ENCODE measurements at regions of chr3 and their contacts with region 1.

Region 1: DNA sequence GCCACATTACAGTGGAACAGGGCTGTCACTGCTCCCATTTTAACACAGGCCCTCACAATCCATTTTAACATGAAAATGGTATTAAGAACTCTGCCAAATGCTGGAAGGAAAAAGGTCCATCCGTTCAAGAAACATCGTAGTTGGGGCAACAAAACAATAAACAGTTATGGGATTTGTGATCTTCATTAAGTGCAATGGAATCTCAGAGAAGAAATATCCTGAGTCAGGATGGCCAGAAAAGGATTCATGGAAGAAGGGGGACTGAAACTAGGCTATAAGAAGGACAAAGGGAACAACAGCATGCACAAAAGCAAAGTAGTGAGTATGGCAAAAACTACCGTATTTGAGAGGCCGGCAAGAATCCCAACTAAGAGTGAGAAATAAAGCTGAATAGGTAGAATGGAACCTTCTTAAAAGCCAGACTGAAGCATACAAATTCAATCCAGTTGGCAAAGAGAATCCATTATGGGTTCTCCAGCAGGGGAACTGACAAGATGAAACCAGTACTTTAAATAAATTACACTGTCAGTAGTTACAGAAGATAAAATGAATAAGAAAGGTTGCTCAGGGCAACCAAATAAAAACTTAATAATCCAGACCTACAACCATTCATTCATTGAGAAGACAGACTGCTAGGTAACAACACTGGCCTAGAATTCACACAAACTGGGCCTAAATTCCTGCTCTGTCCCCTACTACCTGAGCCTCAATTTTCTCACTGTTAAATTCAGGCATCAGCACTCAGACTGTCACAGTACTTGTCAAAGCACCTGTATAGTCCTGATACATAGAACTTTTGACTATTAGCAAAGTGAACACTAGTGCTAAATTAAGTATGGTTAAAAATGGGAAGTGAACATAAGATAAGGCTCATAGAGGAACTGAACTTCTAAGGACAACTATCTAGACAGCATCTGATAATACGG is 6.3 kb downstream of the TBL1XR1 start:
- DNase-seq: no peak
- ATAC-seq: peak in 2 of 4 donors; percentile 21 to 43
- H3K4me3 ChIP-seq: peak overlapping the region in 1 of 12 donors; percentile 7
- H3K27ac ChIP-seq: peak overlapping the region in 10 of 12 donors; percentile 1 to 57 (median 24)
- H3K4me1 ChIP-seq: peaks cover 4 to 61% (median 34%) of the 10 kb centered on the region in 12 donors
- H3K27me3 ChIP-seq: no peaks in the 10 kb centered on the region
- CTCF ChIP-seq: no peak
- POLR2A ChIP-seq: no peak

Region 2: DNA sequence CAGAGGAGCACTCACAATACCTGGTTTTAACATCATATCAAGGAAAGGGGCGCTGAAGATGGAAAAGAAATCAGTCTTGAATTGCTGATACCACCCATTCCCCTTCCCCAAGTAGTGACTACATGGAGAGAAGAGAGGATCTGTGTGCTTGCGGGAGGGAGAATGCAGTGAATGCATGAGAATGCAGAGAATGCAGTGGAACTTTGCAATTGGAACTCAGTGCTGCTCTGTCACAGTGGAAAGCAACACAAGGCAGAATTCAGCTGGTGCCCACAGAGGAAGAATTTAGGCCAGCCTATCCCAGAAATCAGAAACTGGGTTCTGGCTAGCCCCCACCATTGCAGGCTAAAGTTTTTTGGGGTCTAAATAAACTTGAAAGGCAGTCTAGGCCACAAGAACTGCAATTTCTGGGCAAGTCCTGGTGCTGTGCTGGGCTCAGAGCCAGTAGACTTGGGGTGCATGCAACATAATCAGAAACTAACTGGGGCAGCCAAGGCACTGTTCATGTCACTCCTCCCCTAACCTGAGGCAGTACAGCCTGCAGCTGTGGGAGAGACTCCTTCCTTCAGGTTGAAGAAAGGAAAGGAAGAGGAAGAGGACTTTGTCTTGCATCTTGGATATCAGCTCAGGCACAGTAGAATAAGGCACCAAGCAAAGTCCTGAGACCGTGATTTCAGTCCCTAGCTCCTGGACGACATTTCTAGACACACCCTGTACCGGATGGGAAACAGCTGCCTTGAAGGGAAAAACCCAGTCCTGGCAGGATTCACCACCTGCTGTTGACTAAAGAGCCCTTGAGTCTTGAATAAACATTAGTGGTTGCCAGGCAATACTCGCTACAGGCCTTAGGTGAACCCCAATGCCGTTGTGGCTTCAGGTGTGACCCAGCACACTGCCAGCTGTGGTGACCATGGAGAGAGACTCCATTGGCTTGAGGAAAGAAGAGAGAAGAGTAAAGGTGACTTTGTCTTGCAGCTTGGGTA is 323.0 kb before region 1 on chr3:
- intact Hi-C with region 1: no loop called
- DNase-seq: no peak
- ATAC-seq: peak; percentile 24 to 36 (median 34)
- H3K4me3 ChIP-seq: no peak overlapping the region
- H3K27ac ChIP-seq: no peak overlapping the region
- H3K4me1 ChIP-seq: peaks cover 0 to 6% (median 0%) of the 10 kb centered on the region in 12 donors
- H3K27me3 ChIP-seq: no peaks in the 10 kb centered on the region
- CTCF ChIP-seq: no peak
- POLR2A ChIP-seq: no peak

Region 3: GRCh38 chr3:177050501-177051237 is 140.3 kb before region 1 on chr3:
- intact Hi-C with region 1: loop called (anchors 5 to 10 kb)
- DNase-seq: no peak
- ATAC-seq: peak; percentile 53 to 74 (median 60)
- H3K4me3 ChIP-seq: no peak overlapping the region
- H3K27ac ChIP-seq: no peak overlapping the region
- H3K4me1 ChIP-seq: peaks cover 0 to 22% (median 14%) of the 10 kb centered on the region in 12 donors
- H3K27me3 ChIP-seq: no peaks in the 10 kb centered on the region
- CTCF ChIP-seq: peak; percentile 35 to 73 (median 63)
- POLR2A ChIP-seq: no peak

Region 4: GRCh38 chr3:177057768-177058167 is 133.3 kb before region 1 on chr3:
- intact Hi-C with region 1: loop called (anchors 5 to 10 kb)
- DNase-seq: no peak
- ATAC-seq: no peak
- H3K4me3 ChIP-seq: no peak overlapping the region
- H3K27ac ChIP-seq: no peak overlapping the region
- H3K4me1 ChIP-seq: peaks cover 0 to 68% (median 39%) of the 10 kb centered on the region in 12 donors
- H3K27me3 ChIP-seq: no peaks in the 10 kb centered on the region
- CTCF ChIP-seq: no peak
- POLR2A ChIP-seq: no peak

Region 5: GRCh38 chr3:177069514-177070329 is 121.3 kb before region 1 on chr3:
- intact Hi-C with region 1: loop called in 2 of 10 experiments (anchors 5 kb)
- DNase-seq: no peak
- ATAC-seq: no peak
- H3K4me3 ChIP-seq: no peak overlapping the region
- H3K27ac ChIP-seq: no peak overlapping the region
- H3K4me1 ChIP-seq: peaks cover 4 to 56% (median 21%) of the 10 kb centered on the region in 12 donors
- H3K27me3 ChIP-seq: no peaks in the 10 kb centered on the region
- CTCF ChIP-seq: no peak
- POLR2A ChIP-seq: no peak

Region 6: GRCh38 chr3:177126015-177126773 is 64.8 kb before region 1 on chr3:
- intact Hi-C with region 1: loop called in 3 of 10 experiments (anchors 5 to 10 kb)
- DNase-seq: no peak
- ATAC-seq: peak; percentile 53 to 88 (median 76)
- H3K4me3 ChIP-seq: no peak overlapping the region
- H3K27ac ChIP-seq: peak overlapping the region in 7 of 12 donors; percentile 2 to 29 (median 24)
- H3K4me1 ChIP-seq: peaks cover 0 to 66% (median 44%) of the 10 kb centered on the region in 12 donors
- H3K27me3 ChIP-seq: no peaks in the 10 kb centered on the region
- CTCF ChIP-seq: no peak
- POLR2A ChIP-seq: no peak

Region 7: GRCh38 chr3:177150970-177151627 is 39.9 kb before region 1 on chr3:
- intact Hi-C with region 1: loop called in 2 of 10 experiments (anchors 5 kb)
- DNase-seq: no peak
- ATAC-seq: peak in 3 of 4 donors; percentile 29 to 48 (median 38)
- H3K4me3 ChIP-seq: no peak overlapping the region
- H3K27ac ChIP-seq: peak overlapping the region in 1 of 12 donors; percentile 1
- H3K4me1 ChIP-seq: peaks cover 0 to 70% (median 49%) of the 10 kb centered on the region in 12 donors
- H3K27me3 ChIP-seq: no peaks in the 10 kb centered on the region
- CTCF ChIP-seq: no peak
- POLR2A ChIP-seq: no peak

Region 8: DNA sequence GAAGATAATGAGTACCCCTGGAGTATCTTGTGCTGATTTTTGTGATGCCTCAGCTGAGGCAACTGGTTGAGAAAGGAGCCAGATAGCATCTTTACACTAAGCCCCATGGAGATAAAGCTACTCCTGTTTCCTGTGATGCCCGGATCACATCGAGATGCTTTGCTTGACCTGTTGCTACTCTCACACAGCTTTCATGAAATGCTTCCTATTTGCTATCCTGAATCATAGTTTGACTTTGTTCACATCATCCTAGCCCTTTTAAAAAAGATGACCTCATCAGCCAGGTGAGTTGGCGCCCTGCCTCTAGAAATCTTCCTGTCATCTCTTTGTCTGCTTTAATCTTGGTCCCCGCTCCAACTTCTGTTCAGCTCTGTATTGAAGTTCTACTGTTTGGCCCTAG is 415.9 kb after region 1 on chr3:
- intact Hi-C with region 1: no loop called
- DNase-seq: no peak
- ATAC-seq: no peak
- H3K4me3 ChIP-seq: no peak overlapping the region
- H3K27ac ChIP-seq: no peak overlapping the region
- H3K4me1 ChIP-seq: peaks cover 0 to 35% (median 19%) of the 10 kb centered on the region in 12 donors
- H3K27me3 ChIP-seq: no peaks in the 10 kb centered on the region
- CTCF ChIP-seq: no peak
- POLR2A ChIP-seq: no peak